ENCODE measurements at regions of chr4 and their contacts with region 1.

Region 1: GRCh38 chr4:182938205-182938645 is 21.0 kb upstream of the DCTD start:
- DNase-seq: peak; percentile 76

Region 2: DNA sequence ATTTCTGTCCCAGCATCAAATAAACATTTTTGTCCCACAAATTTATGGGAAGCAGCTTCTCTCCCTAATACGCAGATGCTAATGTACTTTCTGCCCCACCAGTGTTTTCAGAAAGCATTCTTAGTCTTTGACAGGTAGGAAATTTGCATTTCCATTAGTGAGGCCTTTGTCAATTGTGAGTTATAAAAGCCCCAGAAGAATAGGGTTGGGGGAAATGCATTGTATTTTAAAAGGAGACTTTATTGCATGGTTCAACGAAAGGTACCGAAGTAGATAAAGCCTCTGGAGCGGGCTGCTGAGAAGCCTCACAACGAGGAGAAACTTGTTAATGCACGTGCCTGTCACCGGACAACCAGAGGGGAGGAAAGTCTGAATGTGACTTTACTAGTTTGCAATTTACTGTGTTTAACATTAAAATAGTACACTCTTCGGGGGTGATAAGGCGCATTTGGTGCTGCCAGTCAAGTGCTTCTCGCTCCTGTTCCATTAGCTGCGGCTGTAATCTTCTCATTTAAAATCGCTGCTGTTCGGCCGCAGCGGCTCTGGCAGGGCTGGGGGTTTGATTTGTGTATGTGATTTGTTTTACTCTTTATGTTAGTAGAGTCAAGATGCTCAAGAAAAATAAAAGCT is 84.4 kb before region 1 on chr4:
- CTCF ChIA-PET with region 1: no interaction called
- POLR2A ChIA-PET with region 1: no interaction called
- DNase-seq: no peak

Region 3: DNA sequence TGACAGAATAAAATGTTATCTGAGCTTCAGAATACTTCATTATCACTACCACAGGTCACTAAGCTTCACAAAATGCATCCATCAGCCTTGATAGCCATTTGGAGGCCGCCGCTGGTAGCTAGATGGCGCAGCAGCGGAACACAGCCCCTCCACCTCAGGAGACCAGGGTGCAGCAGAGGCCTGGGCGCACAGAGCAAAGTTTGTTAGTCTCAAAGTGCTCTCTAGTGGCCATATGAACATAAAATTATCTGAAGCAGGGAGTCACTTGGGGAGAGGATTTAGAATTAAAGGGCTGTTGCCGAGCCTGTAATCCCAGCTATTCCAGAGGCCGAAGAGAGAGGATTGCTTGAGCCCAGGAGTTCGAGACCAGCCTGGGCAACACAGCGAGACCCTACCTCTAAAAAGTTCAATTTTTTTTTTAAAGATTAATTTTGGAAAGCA is 12.9 kb before region 1 on chr4:
- CTCF ChIA-PET with region 1: interaction called, 14 read pairs
- POLR2A ChIA-PET with region 1: no interaction called
- DNase-seq: peak; percentile 63

Region 4: DNA sequence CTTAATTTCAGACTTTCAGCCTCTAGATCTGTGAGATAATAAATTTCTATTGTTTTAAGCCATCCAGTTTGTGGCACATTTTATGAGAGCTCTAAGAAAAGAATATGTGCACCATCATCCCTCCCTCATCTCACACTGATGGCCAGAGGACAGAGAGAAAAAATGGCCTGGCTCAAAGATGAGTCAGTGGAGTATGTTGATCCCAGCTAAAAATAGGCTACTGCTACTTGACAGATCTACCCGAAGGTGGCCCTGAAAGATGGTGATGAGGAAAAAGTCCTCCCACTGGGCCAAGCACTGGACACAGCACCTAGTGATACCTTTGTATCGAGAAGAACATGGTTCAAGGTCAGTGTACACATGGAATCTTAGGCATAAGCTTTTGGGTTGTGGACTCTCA is 17.2 kb after region 1 on chr4:
- CTCF ChIA-PET with region 1: no interaction called
- POLR2A ChIA-PET with region 1: no interaction called
- DNase-seq: no peak

Region 5: GRCh38 chr4:183074296-183074990 is 136.2 kb after region 1 on chr4:
- CTCF ChIA-PET with region 1: interaction called, 17 read pairs
- POLR2A ChIA-PET with region 1: no interaction called
- DNase-seq: no peak

Region 6: GRCh38 chr4:183249857-183250256 is 311.6 kb after region 1 on chr4:
- CTCF ChIA-PET with region 1: interaction called, 17 read pairs
- POLR2A ChIA-PET with region 1: no interaction called
- DNase-seq: peak; percentile 10

Region 7: GRCh38 chr4:183256756-183257385 is 318.6 kb after region 1 on chr4:
- CTCF ChIA-PET with region 1: interaction called, 35 read pairs
- POLR2A ChIA-PET with region 1: no interaction called
- DNase-seq: peak; percentile 57

Region 8: GRCh38 chr4:183261953-183262775 is 323.9 kb after region 1 on chr4:
- CTCF ChIA-PET with region 1: interaction called, 35 read pairs
- POLR2A ChIA-PET with region 1: no interaction called
- DNase-seq: peak; percentile 61